PC-3 (cell line): ENCODE measurements at regions of chr4 and their contacts with region 1.

Region 1: GRCh38 chr4:25367004-25367621 is 9.9 kb upstream of the ANAPC4 start:
- DNase-seq: peak; percentile 56
- ATAC-seq: no peak
- H3K4me3 ChIP-seq: no peak overlapping the region
- H3K27ac ChIP-seq: no peak overlapping the region
- H3K4me1 ChIP-seq: no peaks in the 10 kb centered on the region
- H3K27me3 ChIP-seq: no peaks in the 10 kb centered on the region
- CTCF ChIP-seq: peak; percentile 73

Region 2: DNA sequence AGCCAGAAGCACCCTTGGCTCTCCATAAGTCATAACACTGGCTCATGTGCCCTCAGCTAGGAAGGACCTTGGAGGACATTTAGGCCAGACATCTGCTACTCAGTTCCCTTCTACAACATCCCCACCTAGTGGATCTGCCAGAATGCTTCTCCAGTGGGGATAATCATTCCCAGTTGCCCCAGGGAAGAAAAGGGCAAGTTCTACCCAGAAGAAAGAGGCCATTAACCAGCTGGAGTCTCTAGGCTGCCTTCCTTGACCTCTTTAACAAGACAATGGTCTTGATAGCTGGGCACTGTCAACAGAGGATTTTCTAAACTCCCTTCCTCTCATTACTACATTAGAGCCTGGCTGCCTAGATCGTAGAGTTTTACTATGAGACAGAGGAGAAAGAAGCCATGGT is 378.3 kb before region 1 on chr4:
- CTCF ChIA-PET with region 1: no interaction called
- POLR2A ChIA-PET with region 1: no interaction called
- intact Hi-C with region 1: loop called (anchors 10 kb)
- DNase-seq: peak; percentile 65
- ATAC-seq: peak; percentile 92
- H3K4me3 ChIP-seq: no peak overlapping the region
- H3K27ac ChIP-seq: no peak overlapping the region
- H3K4me1 ChIP-seq: no peaks in the 10 kb centered on the region
- H3K27me3 ChIP-seq: no peaks in the 10 kb centered on the region
- CTCF ChIP-seq: peak; percentile 66

Region 3: GRCh38 chr4:25159884-25160713 is 207.0 kb before region 1 on chr4 and contains the start of gene SEPSECS:
- CTCF ChIA-PET with region 1: no interaction called
- POLR2A ChIA-PET with region 1: no interaction called
- intact Hi-C with region 1: loop called (anchors 5 kb)
- DNase-seq: peak; percentile 96
- ATAC-seq: peak; percentile 70
- H3K4me3 ChIP-seq: peak within 1 kb of the TSS; percentile 87
- H3K27ac ChIP-seq: peak within 1 kb of the TSS; percentile 83
- H3K4me1 ChIP-seq: peaks cover 22% of the 10 kb centered on the region
- H3K27me3 ChIP-seq: no peaks in the 10 kb centered on the region
- CTCF ChIP-seq: no peak
- total RNA-seq, gene SEPSECS: 3.1 and 5.2 TPM in 2 replicates

Region 4: DNA sequence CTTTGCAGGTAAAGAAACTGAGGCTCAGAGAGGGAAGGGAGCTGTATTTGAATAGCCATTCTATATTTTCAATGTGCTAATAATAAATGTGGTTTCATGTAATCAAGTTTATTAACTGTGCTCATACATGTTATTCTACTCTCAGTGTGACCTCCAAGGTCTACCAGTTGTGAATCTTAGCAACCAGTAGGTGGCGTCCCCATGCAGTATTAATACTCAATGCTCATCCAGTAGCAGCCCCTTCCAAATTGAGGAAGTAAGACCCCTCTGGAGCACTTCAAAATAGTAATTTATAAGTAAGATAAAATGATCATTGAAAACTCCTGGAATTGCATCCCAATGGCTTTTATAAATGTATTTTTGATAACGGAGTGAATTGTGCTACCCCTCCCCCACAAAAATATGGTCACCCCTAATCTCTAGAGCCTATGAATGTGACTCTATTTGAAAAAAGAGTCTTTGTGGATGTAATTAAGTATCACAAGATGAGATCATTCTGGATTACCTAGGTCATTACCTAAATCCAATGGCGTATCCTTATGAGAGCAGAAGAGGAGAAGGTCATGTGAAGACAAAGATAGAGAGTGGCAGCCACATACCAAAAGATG is 186.5 kb before region 1 on chr4:
- CTCF ChIA-PET with region 1: interaction called, 3 read pairs
- POLR2A ChIA-PET with region 1: no interaction called
- intact Hi-C with region 1: loop called (anchors 2 kb)
- DNase-seq: peak; percentile 50
- ATAC-seq: 0 out of 2 replicates have a peak, but pooled peaks have one; percentile 35
- H3K4me3 ChIP-seq: no peak overlapping the region
- H3K27ac ChIP-seq: no peak overlapping the region
- H3K4me1 ChIP-seq: no peaks in the 10 kb centered on the region
- H3K27me3 ChIP-seq: no peaks in the 10 kb centered on the region
- CTCF ChIP-seq: peak; percentile 84

Region 5: DNA sequence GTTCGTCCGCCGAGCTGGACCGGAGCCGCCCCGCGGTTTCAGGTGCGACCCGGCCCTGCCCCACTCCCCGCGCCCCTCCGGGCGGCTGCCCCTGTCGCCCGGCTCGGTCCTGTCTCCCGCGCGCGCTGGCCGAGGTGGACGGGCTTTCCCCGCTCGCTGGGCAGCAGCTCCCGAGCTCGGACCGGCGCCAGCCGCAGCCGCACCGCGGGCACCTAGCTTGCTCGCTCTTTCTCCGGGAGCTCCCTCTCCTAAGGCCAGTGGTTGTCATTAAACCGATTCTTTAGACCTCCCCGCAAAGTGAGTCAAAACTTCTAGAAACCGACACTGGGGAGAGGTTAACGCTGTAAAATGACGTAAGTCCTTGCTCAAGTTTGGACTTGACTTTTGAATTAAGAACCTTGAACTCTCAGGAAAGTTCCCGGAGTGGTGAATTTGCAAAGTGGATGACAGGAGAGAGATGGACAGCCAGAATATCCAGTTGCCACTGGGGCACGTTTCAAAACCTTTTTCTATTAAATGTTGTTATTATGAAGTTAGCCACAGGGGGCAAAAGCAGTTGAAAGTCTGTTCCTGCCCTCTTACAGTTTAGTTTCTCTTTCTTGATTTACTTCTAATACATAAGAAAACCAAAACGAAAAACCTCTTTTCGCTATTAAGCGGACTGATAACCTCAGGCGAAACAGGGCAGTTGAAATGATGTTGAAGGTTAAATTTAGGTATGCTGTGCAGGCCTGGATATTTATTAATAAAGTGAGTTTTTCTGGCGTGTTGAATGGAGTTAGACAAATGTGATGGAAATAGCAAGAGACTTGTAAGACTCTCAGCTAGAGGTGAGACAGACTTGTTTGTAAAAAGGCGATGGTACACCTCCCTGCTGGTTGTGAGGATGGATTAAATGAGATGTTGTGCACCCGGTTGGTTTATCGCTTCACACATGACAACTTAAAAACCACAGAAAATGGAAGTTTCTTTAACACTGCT is 132.4 kb before region 1 on chr4:
- CTCF ChIA-PET with region 1: interaction called, 7 read pairs
- POLR2A ChIA-PET with region 1: no interaction called
- intact Hi-C with region 1: loop called (anchors 1 kb)
- DNase-seq: peak; percentile 78
- ATAC-seq: peak; percentile 64
- H3K4me3 ChIP-seq: peak overlapping the region; percentile 88
- H3K27ac ChIP-seq: peak overlapping the region; percentile 29
- H3K4me1 ChIP-seq: no peaks in the 10 kb centered on the region
- H3K27me3 ChIP-seq: no peaks in the 10 kb centered on the region
- CTCF ChIP-seq: peak; percentile 53; the same call in 1 of the 2 replicates

Region 6: DNA sequence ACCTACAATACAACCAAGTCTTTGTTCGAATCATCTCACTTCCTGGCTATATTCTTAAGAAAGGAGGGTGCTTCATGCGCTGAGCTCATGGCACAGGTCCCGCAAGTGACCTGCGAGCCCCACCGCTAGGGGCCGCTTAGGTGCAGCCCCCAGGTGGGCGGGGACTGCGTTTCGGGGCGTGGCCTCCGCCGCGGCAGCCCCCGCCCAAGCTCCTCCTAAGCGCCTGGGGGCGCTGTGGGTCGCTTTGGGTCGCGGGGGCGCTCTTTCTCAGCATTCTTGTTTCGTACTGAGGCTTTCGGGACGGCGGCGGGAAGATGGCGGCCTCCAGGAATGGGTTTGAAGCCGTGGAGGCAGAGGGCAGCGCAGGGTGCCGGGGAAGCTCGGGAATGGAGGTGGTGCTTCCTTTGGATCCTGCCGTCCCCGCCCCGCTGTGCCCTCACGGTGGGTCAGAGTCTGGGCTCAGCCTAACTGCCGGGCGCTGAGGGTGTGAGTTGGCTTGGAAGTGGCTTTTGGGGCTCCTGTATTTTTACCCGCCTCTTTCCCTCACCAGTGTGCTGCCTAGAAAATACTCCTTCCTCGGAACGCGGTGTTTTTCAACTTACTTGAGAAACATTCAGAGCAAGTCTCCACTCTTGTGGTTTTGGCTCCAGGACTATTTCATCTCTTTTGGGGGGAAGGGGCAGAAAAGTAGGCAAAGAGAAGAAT is 54.5 kb before region 1 on chr4 and contains the start of gene ZCCHC4:
- CTCF ChIA-PET with region 1: interaction called, 9 read pairs
- POLR2A ChIA-PET with region 1: interaction called, 6 read pairs
- intact Hi-C with region 1: loop called (anchors 5 kb)
- DNase-seq: peak; percentile 83
- ATAC-seq: peak; percentile 92
- H3K4me3 ChIP-seq: peak within 1 kb of the TSS; percentile 91
- H3K27ac ChIP-seq: peak within 1 kb of the TSS; percentile 48
- H3K4me1 ChIP-seq: peaks cover 13% of the 10 kb centered on the region; the same call in 1 of the 2 replicates
- H3K27me3 ChIP-seq: no peaks in the 10 kb centered on the region
- CTCF ChIP-seq: peak; percentile 95
- total RNA-seq, gene ZCCHC4: 6.5 and 6.8 TPM in 2 replicates